Cardiac septum (tissue), 1 donor: ENCODE measurements at regions of chr1 and their contacts with region 1.

Region 1: GRCh38 chr1:215526553-215527151 is 40.5 kb upstream of the KCTD3 start:
- DNase-seq: no peak

Region 2: GRCh38 chr1:214658786-214659185 is 867.9 kb before region 1 on chr1:
- intact Hi-C with region 1: loop called (anchors 5 kb)
- DNase-seq: no peak

Region 3: GRCh38 chr1:215484171-215484939 is 42.3 kb before region 1 on chr1:
- intact Hi-C with region 1: no loop called
- DNase-seq: no peak